ENCODE measurements at regions of chr2 and their contacts with region 1.

Region 1: GRCh38 chr2:231674587-231675338 is 33.6 kb upstream of the PTMA start:
- H3K4me3 ChIP-seq: no peak overlapping the region
- H3K27ac ChIP-seq: no peak overlapping the region
- H3K4me1 ChIP-seq: no peaks in the 10 kb centered on the region
- CTCF ChIP-seq: peak; percentile 82

Region 2: GRCh38 chr2:231563378-231563961 is 111.3 kb before region 1 on chr2:
- CTCF ChIA-PET with region 1: interaction called, 10 read pairs
- POLR2A ChIA-PET with region 1: no interaction called
- H3K4me3 ChIP-seq: no peak overlapping the region
- H3K27ac ChIP-seq: no peak overlapping the region
- H3K4me1 ChIP-seq: no peaks in the 10 kb centered on the region
- CTCF ChIP-seq: peak; percentile 39; the same call in 1 of the 2 replicates

Region 3: DNA sequence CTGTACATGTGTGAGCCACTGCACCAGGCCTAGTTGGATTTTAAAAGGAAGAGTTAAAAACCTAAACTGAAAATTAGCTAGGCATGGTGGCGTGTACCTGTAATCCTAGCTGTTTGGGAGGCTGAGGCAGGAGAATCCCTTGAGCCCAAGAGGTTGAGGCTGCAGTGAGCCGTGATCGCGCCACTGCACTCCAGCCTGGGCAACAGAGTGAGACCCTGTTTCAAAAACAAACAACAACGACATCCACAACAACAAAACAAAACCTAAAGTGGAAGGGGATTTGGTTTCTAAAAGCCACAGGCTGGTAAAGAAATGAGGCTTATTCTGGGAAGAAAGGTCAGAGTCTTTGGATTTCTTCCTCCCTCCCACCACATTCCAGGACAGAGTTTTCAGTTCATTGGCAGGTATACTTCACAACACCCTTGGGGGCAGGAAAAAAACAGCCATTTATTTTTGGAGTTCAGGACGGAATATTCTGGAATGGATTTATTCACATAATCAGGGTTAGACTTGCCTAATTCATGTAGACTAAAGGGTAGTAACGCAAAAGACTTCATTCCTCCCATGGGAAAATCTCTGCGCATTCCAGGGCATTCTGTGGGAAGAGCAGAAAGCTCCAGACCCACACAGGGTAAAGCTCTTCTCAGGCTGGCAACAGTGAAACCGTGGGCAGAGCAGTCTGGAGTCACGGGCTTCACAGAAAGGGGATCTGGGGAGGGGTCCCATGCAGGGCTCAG is 47.2 kb before region 1 on chr2:
- CTCF ChIA-PET with region 1: interaction called, 10 read pairs
- POLR2A ChIA-PET with region 1: interaction called, 3 read pairs
- H3K4me3 ChIP-seq: no peak overlapping the region
- H3K27ac ChIP-seq: no peak overlapping the region
- H3K4me1 ChIP-seq: no peaks in the 10 kb centered on the region; the same call in 1 of the 2 replicates
- CTCF ChIP-seq: no peak

Region 4: GRCh38 chr2:231648587-231649174 is 26.1 kb before region 1 on chr2:
- CTCF ChIA-PET with region 1: interaction called, 139 read pairs
- POLR2A ChIA-PET with region 1: interaction called, 4 read pairs
- H3K4me3 ChIP-seq: no peak overlapping the region
- H3K27ac ChIP-seq: no peak overlapping the region
- H3K4me1 ChIP-seq: no peaks in the 10 kb centered on the region
- CTCF ChIP-seq: peak; percentile 95

Region 5: GRCh38 chr2:231687133-231687852 is 12.5 kb after region 1 on chr2:
- CTCF ChIA-PET with region 1: interaction called, 34 read pairs
- POLR2A ChIA-PET with region 1: interaction called, 3 read pairs
- H3K4me3 ChIP-seq: no peak overlapping the region
- H3K27ac ChIP-seq: peak overlapping the region; percentile 2; the same call in 1 of the 2 replicates
- H3K4me1 ChIP-seq: no peaks in the 10 kb centered on the region
- CTCF ChIP-seq: peak; percentile 95

Region 6: DNA sequence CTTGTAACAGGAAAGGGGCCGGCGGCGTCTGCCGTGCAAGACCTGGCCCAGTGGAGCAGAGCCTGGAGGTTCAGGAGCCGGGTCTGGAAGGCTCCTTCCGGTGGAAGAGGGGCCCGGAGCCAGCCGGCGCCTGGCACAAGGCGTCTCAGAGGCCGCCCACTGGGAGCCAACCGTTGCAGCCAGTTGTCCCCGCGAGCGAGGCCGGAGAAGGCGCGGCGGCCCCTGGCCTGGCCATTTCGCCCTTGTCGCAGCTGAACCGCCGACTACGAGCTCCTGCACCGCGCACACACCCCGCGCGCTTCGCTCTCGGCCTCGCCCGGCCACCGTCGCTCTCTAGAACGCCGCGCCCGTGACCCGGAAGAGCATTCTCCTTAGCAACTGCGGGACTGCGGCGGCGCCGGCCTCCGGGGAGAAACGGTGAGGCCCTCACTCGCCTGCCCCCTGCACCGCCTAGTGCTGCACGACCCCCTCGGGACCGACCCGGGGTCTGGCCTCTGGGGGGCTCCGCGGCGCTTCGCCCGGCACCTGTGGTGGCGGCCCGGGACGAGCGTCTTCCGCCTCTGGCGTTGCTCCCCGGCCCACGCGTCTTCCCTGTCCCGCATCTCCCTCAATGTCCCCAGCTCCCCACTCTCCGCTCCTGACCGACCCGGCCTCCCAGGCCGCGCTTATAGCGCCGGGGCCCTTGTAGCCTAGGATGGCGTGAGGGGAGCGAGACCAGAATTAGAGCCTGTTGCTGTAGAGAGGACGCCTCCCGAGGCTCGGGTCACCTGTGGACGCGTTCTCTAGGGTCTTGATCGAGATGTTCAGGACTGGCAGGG is 286.8 kb after region 1 on chr2 and contains the start of gene DIS3L2:
- CTCF ChIA-PET with region 1: no interaction called
- POLR2A ChIA-PET with region 1: no interaction called
- H3K4me3 ChIP-seq: peak within 1 kb of the TSS; percentile 77
- H3K27ac ChIP-seq: peak within 1 kb of the TSS; percentile 84
- H3K4me1 ChIP-seq: peaks cover 4% of the 10 kb centered on the region; the same call in 1 of the 2 replicates
- CTCF ChIP-seq: peak; percentile 95